MCF 10A (cell line): ENCODE measurements at regions of chr2 and their contacts with region 1.

Region 1: GRCh38 chr2:124810132-124810531 is 785.0 kb downstream of the CNTNAP5 start:
- DNase-seq: peak; percentile 72
- H3K4me3 Mint-ChIP-seq: no peak overlapping the region
- H3K27ac Mint-ChIP-seq: no peak overlapping the region
- H3K4me1 Mint-ChIP-seq: peaks cover 7% of the 10 kb centered on the region
- H3K27me3 Mint-ChIP-seq: no peaks in the 10 kb centered on the region
- CTCF ChIP-seq: peak; percentile 54

Region 2: DNA sequence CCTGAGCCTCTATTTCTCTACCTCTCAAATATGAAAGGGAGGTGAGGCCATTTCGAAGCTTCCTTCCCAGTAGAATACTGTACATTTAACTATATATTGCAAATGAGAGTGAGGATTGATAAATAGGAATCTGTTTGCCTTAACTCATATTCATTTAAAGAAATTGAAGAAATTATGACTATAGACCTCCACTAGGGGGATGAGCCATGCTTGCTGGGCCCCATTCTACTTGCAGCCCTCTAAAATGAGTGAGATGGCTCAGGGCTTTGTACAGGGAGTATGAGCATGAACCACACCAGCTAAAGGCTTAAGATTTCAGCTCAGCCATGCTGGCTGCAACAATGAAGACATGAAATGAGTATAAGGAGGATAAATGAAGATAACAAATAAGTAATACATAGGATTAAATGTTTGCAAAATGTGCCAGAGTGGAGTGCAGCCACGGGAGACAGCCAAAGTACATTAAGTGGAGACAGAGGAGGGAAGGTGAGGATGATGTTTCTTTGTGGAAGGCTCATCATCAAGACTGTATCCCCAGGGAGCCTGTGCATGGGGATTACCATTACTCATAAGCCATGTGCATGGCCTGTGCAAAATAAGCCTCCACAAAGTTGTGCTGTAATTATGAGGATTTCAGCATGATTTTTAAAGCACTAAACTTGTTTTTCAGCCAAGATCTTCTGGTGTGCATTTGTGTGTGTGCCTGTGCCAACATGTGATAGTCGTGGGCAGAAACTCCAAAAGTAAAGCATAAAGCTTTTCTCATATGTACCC is 484.3 kb before region 1 on chr2:
- CTCF ChIA-PET with region 1: no interaction called
- POLR2A ChIA-PET with region 1: no interaction called
- intact Hi-C with region 1: loop called (anchors 10 kb)
- DNase-seq: peak; percentile 17
- H3K4me3 Mint-ChIP-seq: no peak overlapping the region
- H3K27ac Mint-ChIP-seq: no peak overlapping the region
- H3K4me1 Mint-ChIP-seq: peaks cover 10% of the 10 kb centered on the region
- H3K27me3 Mint-ChIP-seq: no peaks in the 10 kb centered on the region
- CTCF ChIP-seq: peak; percentile 14

Region 3: DNA sequence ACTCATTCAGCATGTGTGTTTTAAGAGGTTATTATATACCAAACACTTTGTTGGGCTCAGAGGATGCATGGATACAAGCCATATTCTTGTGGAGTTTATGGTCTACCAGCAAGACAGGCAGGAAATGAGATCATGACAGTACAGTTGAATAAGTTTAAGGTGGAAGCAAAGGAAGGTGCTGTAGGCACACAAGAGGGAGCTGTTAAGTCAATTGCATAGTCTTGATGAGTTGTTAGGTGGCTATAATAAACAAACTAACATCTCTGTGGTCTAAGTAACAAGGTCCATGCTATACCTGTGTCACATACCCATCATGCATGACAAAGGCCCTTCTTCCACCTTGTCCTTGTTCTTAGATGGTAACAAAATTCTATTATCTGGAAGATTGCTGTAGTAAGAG is 246.7 kb before region 1 on chr2:
- CTCF ChIA-PET with region 1: no interaction called
- POLR2A ChIA-PET with region 1: no interaction called
- intact Hi-C with region 1: no loop called
- DNase-seq: peak; percentile 11
- H3K4me3 Mint-ChIP-seq: no peak overlapping the region
- H3K27ac Mint-ChIP-seq: no peak overlapping the region
- H3K4me1 Mint-ChIP-seq: peaks cover 9% of the 10 kb centered on the region
- H3K27me3 Mint-ChIP-seq: no peaks in the 10 kb centered on the region
- CTCF ChIP-seq: no peak

Region 4: DNA sequence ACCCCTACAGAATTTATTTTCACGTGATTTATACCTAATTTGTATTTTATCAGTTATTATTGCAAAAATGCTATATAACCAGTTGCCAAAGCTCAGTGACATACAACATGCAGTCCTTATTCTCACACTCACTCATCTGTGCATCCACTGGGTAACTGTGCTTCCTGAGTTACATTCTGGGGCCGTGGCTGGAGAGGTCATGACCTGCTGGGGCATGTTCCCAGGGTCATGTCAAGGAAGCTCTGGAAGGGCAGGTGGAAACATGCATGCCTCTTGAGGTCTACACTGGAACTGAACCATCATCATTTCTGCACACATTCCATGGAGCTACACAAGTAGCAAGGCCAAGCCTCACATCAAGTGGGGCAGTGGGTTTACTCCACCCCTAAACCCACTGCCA is 69.5 kb before region 1 on chr2:
- CTCF ChIA-PET with region 1: no interaction called
- POLR2A ChIA-PET with region 1: no interaction called
- intact Hi-C with region 1: no loop called
- DNase-seq: no peak
- H3K4me3 Mint-ChIP-seq: no peak overlapping the region
- H3K27ac Mint-ChIP-seq: no peak overlapping the region
- H3K4me1 Mint-ChIP-seq: no peaks in the 10 kb centered on the region
- H3K27me3 Mint-ChIP-seq: no peaks in the 10 kb centered on the region
- CTCF ChIP-seq: no peak